ENCODE measurements at regions of chr1 and their contacts with region 1.

Region 1: GRCh38 chr1:152673016-152673415 is 2.1 kb upstream of the LCE2C start:
- DNase-seq: no peak
- H3K4me3 ChIP-seq: no peak overlapping the region
- H3K27ac ChIP-seq: no peak overlapping the region
- H3K4me1 ChIP-seq: no peaks in the 10 kb centered on the region
- H3K27me3 ChIP-seq: peaks cover 22% of the 10 kb centered on the region
- CTCF ChIP-seq: no peak

Region 2: GRCh38 chr1:152479792-152480595 is 193.0 kb before region 1 on chr1:
- CTCF ChIA-PET with region 1: interaction called, 17 read pairs
- POLR2A ChIA-PET with region 1: no interaction called
- intact Hi-C with region 1: no loop called
- DNase-seq: peak; percentile 77
- H3K4me3 ChIP-seq: no peak overlapping the region
- H3K27ac ChIP-seq: no peak overlapping the region
- H3K4me1 ChIP-seq: no peaks in the 10 kb centered on the region
- H3K27me3 ChIP-seq: no peaks in the 10 kb centered on the region
- CTCF ChIP-seq: peak; percentile 63

Region 3: GRCh38 chr1:152777525-152778137 is 104.6 kb after region 1 on chr1:
- CTCF ChIA-PET with region 1: no interaction called
- POLR2A ChIA-PET with region 1: no interaction called
- intact Hi-C with region 1: no loop called
- DNase-seq: peak; percentile 42
- H3K4me3 ChIP-seq: no peak overlapping the region
- H3K27ac ChIP-seq: no peak overlapping the region
- H3K4me1 ChIP-seq: no peaks in the 10 kb centered on the region
- H3K27me3 ChIP-seq: peaks cover 27% of the 10 kb centered on the region
- CTCF ChIP-seq: peak; percentile 60

Region 4: DNA sequence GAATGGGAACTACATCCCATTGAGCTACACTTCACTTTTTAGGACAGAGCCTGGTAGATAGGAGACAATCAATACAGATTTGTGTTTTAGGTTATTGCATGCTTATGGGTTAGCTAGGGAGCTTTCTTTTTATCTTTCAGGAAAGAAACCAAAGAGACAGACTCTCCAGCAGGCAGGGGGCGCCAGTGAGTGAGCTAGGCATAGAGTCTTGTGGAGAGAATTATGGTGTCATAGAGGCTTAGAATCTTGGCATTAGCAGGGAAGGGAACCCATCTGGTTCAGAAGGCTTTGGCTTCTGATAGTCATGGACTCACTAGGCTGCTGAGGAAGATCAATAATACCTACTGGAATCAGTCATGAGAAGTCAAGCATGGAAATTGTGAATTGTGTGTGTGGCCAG is 205.0 kb after region 1 on chr1 and contains the start of gene SMCP:
- CTCF ChIA-PET with region 1: no interaction called
- POLR2A ChIA-PET with region 1: no interaction called
- intact Hi-C with region 1: no loop called
- DNase-seq: peak; percentile 46
- H3K4me3 ChIP-seq: no peak within 1 kb of the TSS
- H3K27ac ChIP-seq: no peak within 1 kb of the TSS
- H3K4me1 ChIP-seq: no peaks in the 10 kb centered on the region
- H3K27me3 ChIP-seq: no peaks in the 10 kb centered on the region
- CTCF ChIP-seq: peak; percentile 60
- total RNA-seq, gene SMCP: not detected in 2 replicates

Region 5: GRCh38 chr1:152972196-152972886 is 299.3 kb after region 1 on chr1:
- CTCF ChIA-PET with region 1: no interaction called
- POLR2A ChIA-PET with region 1: no interaction called
- intact Hi-C with region 1: no loop called
- DNase-seq: no peak
- H3K4me3 ChIP-seq: no peak overlapping the region
- H3K27ac ChIP-seq: no peak overlapping the region
- H3K4me1 ChIP-seq: no peaks in the 10 kb centered on the region
- H3K27me3 ChIP-seq: peaks cover 1% of the 10 kb centered on the region
- CTCF ChIP-seq: no peak

Measured in A673 (cell line).